ENCODE measurements at regions of chr1 and their contacts with region 1.

Region 1: GRCh38 chr1:99691175-99691574 is 45.3 kb downstream of the PALMD start:
- DNase-seq: no peak
- ATAC-seq: no peak
- H3K4me3 ChIP-seq: no peak overlapping the region
- H3K27ac ChIP-seq: no peak overlapping the region
- H3K4me1 ChIP-seq: no peaks in the 10 kb centered on the region
- H3K27me3 ChIP-seq: no peaks in the 10 kb centered on the region
- CTCF ChIP-seq: no peak

Region 2: GRCh38 chr1:99469550-99469971 is 221.6 kb before region 1 on chr1:
- intact Hi-C with region 1: no loop called
- DNase-seq: no peak
- ATAC-seq: no peak
- H3K4me3 ChIP-seq: no peak overlapping the region
- H3K27ac ChIP-seq: no peak overlapping the region
- H3K4me1 ChIP-seq: no peaks in the 10 kb centered on the region
- H3K27me3 ChIP-seq: no peaks in the 10 kb centered on the region
- CTCF ChIP-seq: no peak

Region 3: GRCh38 chr1:99496067-99496466 is 195.1 kb before region 1 on chr1:
- intact Hi-C with region 1: loop called in 1 of 2 experiments (anchors 10 kb)
- DNase-seq: no peak
- ATAC-seq: no peak
- H3K4me3 ChIP-seq: no peak overlapping the region
- H3K27ac ChIP-seq: no peak overlapping the region
- H3K4me1 ChIP-seq: no peaks in the 10 kb centered on the region
- H3K27me3 ChIP-seq: no peaks in the 10 kb centered on the region
- CTCF ChIP-seq: no peak

Measured in left lung (tissue), 14 donors.